Tibial artery (tissue), 4 donors: ENCODE measurements at regions of chr17 and their contacts with region 1.

Region 1: GRCh38 chr17:7045909-7046724 is 2.2 kb upstream of the SLC16A11 start:
- DNase-seq: no peak
- H3K4me3 ChIP-seq: no peak overlapping the region
- H3K27ac ChIP-seq: no peak overlapping the region
- H3K4me1 ChIP-seq: peaks cover 0 to 35% (median 26%) of the 10 kb centered on the region in 4 donors
- H3K27me3 ChIP-seq: peaks cover 8 to 79% of the 10 kb centered on the region in 2 donors
- CTCF ChIP-seq: peak; percentile 70 to 75

Region 2: DNA sequence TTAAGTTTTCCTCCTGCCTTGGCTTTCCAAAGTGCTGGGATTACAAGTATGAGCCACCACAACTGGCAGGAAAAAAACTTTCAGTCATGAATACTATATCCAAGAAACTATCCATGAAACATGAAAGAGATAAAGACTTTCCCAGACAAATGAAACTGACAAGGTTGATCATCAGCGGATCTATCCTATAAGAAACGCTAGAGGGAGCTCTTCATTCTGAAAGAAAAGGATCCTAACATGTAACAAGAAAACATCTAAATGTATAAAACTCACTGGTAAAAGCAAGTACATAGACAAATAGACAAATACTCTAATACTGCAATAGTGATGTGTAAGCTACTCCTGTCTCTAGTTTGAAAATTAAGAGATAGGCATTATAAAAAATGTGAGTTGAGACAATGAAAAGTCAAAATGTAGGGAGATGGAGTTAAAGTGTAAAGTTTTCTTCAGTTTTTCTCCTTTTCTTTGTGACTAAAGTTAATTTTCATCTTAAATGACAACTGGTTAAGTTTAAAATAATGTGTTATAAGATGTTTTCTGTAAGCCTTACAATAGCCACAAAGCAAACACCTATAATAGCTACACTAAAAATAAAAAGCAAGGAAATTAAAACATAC is 135.0 kb before region 1 on chr17:
- intact Hi-C with region 1: no loop called
- DNase-seq: no peak
- H3K4me3 ChIP-seq: no peak overlapping the region
- H3K27ac ChIP-seq: no peak overlapping the region
- H3K4me1 ChIP-seq: peaks cover 0 to 3% (median 0%) of the 10 kb centered on the region in 4 donors
- H3K27me3 ChIP-seq: peaks cover 0 to 18% of the 10 kb centered on the region in 2 donors
- CTCF ChIP-seq: peak; percentile 42 to 45

Region 3: DNA sequence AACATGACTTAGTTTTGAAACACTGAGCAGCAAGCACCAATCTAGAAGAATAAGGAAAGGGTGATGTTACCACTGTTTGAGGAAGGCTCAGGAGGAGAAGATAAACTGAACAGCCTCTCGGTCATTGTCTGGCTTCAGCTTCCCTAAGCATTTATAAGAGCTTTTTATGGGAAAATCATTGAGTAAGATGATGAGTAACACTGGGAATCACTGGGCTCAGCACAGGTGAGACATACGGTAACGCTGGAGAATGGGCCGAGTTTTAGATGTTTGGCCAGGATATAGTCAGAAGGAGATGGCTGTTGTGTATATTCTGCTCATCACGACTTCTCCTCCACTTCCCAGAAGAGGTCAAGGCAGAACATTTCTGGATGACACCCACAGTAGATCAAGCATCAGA is 92.4 kb before region 1 on chr17:
- intact Hi-C with region 1: no loop called
- DNase-seq: no peak
- H3K4me3 ChIP-seq: no peak overlapping the region
- H3K27ac ChIP-seq: no peak overlapping the region
- H3K4me1 ChIP-seq: no peaks in the 10 kb centered on the region
- H3K27me3 ChIP-seq: no peaks in the 10 kb centered on the region
- CTCF ChIP-seq: no peak

Region 4: GRCh38 chr17:7136266-7136877 is 90.3 kb after region 1 on chr17:
- intact Hi-C with region 1: loop called (anchors 5 kb)
- DNase-seq: peak; percentile 79 to 83
- H3K4me3 ChIP-seq: no peak overlapping the region
- H3K27ac ChIP-seq: no peak overlapping the region
- H3K4me1 ChIP-seq: no peaks in the 10 kb centered on the region
- H3K27me3 ChIP-seq: peaks cover 0 to 72% of the 10 kb centered on the region in 2 donors
- CTCF ChIP-seq: peak; percentile 80 to 82